ENCODE measurements at regions of chr15 and their contacts with region 1.

Region 1: GRCh38 chr15:82809404-82810060 is at the start of gene WHAMM:
- DNase-seq: peak; percentile 99
- H3K4me3 ChIP-seq: peak within 1 kb of the TSS; percentile 90 to 91
- H3K27ac ChIP-seq: peak within 1 kb of the TSS; percentile 98 to 100
- H3K4me1 ChIP-seq: peaks cover 7 to 16% of the 10 kb centered on the region in 2 donors
- H3K27me3 ChIP-seq: no peaks in the 10 kb centered on the region
- CTCF ChIP-seq: peak in 1 of 3 experiments; percentile 8
- total RNA-seq, gene WHAMM: 18.8 TPM

Region 2: GRCh38 chr15:82647045-82647834 is 162.3 kb before region 1 on chr15 and contains the start of gene CPEB1:
- intact Hi-C with region 1: loop called (anchors 2 kb)
- DNase-seq: peak in 1 of 2 donors; percentile 72
- H3K4me3 ChIP-seq: peak within 1 kb of the TSS; percentile 66 to 78
- H3K27ac ChIP-seq: peak within 1 kb of the TSS; percentile 33 to 54
- H3K4me1 ChIP-seq: peaks cover 8 to 12% of the 10 kb centered on the region in 2 donors
- H3K27me3 ChIP-seq: no peaks in the 10 kb centered on the region
- CTCF ChIP-seq: peak in 2 of 3 experiments; percentile 4 to 9
- total RNA-seq, gene CPEB1: 2.4 TPM

Region 3: GRCh38 chr15:82749951-82750830 is 59.3 kb before region 1 on chr15:
- intact Hi-C with region 1: loop called (anchors 1 kb)
- DNase-seq: peak; percentile 73 to 95
- H3K4me3 ChIP-seq: peak overlapping the region; percentile 73 to 90
- H3K27ac ChIP-seq: peak overlapping the region; percentile 85 to 89
- H3K4me1 ChIP-seq: peaks cover 5 to 7% of the 10 kb centered on the region in 2 donors
- H3K27me3 ChIP-seq: no peaks in the 10 kb centered on the region
- CTCF ChIP-seq: no peak

Region 4: GRCh38 chr15:82832601-82833361 is 23.2 kb after region 1 on chr15:
- intact Hi-C with region 1: loop called (anchors 1 kb)
- DNase-seq: no peak
- H3K4me3 ChIP-seq: no peak overlapping the region
- H3K27ac ChIP-seq: peak overlapping the region; percentile 44 to 58
- H3K4me1 ChIP-seq: peaks cover 0 to 11% of the 10 kb centered on the region in 2 donors
- H3K27me3 ChIP-seq: no peaks in the 10 kb centered on the region
- CTCF ChIP-seq: no peak

Region 5: DNA sequence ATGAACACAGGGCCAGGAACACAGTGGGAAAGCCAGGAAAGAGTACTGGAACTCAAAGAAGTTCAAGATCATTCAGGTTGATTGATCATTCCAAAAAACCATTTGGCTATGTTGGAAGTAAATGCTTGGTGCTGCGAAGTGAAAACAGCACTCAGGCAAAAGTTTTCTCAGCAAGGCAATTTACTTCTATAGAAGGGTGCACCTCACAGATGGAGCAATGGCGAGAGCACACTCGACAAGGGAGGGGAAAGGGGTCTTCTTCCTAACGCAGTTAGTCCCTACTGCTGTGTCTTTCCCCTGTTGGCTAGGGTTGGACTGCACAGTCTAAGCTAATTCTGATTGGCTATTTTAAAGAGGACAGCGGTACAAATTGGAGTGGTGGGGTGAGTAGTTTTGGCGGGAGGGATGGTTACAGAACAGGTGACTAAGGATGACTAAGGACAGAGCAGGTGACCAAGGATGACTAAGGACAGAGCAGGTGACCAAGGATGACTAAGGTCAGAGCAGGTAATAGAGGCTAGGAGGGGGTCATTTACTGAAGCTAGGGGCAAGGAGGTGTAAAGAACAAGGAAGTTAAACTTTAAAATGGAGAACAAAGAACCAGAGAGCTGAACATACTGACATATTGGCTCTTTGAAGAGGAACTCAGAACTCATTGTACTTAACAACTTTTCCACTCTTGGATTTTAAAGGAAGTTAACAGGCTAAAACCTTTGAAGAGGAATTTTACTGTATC is 99.7 kb after region 1 on chr15:
- intact Hi-C with region 1: no loop called
- DNase-seq: no peak
- H3K4me3 ChIP-seq: no peak overlapping the region
- H3K27ac ChIP-seq: no peak overlapping the region
- H3K4me1 ChIP-seq: no peaks in the 10 kb centered on the region
- H3K27me3 ChIP-seq: no peaks in the 10 kb centered on the region
- CTCF ChIP-seq: no peak

Region 6: DNA sequence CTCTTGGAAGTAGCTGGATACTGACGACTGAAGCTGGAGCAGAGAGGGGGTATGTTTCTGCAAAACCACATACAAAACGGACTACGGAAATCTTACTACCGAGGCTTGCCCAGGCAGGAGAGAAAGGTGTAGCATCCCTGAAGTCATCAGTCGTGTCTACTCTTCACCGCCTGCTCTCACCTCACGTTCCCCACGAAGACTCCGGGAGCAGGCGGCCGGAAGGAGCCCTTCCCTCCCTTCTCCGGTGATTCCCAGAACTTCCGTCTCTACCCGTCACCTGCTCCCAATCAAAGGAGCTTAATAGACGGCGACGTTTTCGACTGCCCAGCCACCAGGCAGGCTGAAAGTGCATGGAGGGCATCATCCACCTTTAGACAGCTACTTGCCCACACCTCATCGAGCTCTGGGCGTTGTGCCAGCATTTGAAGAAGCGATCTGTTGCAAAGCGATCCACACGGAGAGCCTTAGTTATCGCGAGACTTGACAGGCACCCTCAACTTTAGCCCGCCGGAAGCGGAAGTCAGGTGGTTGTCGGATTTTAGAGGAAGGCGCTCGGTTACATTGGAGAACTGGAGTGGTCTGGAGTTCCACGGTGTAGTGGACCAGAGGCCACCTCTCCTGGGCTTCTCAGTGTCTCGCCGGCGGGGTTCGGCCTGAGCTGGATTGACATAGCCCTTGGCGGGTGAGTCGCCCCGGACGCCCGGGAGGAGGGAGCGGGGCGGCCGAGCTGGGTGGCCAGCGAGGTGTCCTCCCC is 176.3 kb after region 1 on chr15 and contains the start of gene RAMAC:
- intact Hi-C with region 1: loop called (anchors 5 kb)
- DNase-seq: peak; percentile 83 to 97
- H3K4me3 ChIP-seq: peak within 1 kb of the TSS; percentile 78 to 89
- H3K27ac ChIP-seq: peak within 1 kb of the TSS; percentile 63 to 72
- H3K4me1 ChIP-seq: peaks cover 0 to 14% of the 10 kb centered on the region in 2 donors
- H3K27me3 ChIP-seq: no peaks in the 10 kb centered on the region
- CTCF ChIP-seq: no peak
- total RNA-seq, gene RAMAC: 4.8 TPM

Region 7: DNA sequence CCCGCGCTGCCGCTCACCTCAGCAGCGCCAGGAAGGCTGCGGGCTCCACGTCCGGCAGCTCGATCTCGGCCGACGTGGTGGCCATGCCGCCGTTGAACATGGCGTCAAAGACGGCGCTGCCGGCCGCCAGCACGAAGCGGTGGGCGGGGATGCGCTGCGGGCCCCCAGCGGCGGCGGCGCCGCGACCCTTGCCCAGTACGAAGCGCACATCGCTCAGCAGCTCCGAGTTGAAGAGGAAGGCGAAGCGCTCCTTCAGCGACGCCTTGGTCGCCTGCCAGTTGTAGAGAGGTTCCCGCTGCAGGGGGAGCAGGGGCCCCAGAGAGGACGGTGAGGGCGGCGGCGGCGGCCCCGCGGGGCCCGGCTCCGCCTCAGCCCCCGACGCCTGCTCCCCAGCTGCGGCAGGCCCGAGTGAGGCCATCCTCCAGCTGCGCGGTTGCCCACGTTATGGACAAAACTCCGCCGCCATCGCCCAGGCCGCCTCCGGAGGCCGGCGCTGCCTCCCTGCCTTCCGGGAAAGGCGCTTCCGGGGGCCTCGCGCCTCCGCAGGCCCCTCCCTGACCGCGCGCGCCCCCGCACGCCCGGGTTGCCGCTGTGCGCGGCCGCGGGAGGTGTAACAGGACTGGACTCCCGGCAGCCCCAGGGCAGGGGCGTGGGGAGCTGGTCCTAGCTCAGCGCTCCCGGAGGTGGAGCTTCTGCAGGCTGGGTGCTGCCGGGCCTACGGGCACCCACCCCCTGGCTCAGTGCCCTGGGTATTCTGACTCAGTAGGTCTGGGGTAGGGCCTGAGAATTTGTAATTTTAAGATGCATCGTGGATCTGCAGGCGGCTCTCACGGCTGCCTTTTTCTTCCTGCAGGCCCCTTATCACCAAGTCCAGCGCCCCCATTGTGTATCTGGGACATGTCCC is 257.5 kb after region 1 on chr15 and contains the start of gene BTBD1:
- intact Hi-C with region 1: loop called (anchors 5 kb)
- DNase-seq: peak; percentile 92 to 99
- H3K4me3 ChIP-seq: peak within 1 kb of the TSS; percentile 91 to 98
- H3K27ac ChIP-seq: peak within 1 kb of the TSS; percentile 97 to 99
- H3K4me1 ChIP-seq: peaks cover 17 to 25% of the 10 kb centered on the region in 2 donors
- H3K27me3 ChIP-seq: no peaks in the 10 kb centered on the region
- CTCF ChIP-seq: peak in 1 of 3 experiments; percentile 5
- total RNA-seq, gene BTBD1: 63.9 TPM